ENCODE measurements at regions of chr14 and their contacts with region 1.

Region 1: GRCh38 chr14:103512701-103513611 is 9.7 kb downstream of the CKB start:
- DNase-seq: peak; percentile 97
- H3K4me3 ChIP-seq: peak overlapping the region in 1 of 3 experiments; percentile 12
- H3K27ac ChIP-seq: peak overlapping the region; percentile 73
- H3K4me1 ChIP-seq: peaks cover 21% of the 10 kb centered on the region
- H3K27me3 ChIP-seq: no peaks in the 10 kb centered on the region
- CTCF ChIP-seq: no peak

Region 2: DNA sequence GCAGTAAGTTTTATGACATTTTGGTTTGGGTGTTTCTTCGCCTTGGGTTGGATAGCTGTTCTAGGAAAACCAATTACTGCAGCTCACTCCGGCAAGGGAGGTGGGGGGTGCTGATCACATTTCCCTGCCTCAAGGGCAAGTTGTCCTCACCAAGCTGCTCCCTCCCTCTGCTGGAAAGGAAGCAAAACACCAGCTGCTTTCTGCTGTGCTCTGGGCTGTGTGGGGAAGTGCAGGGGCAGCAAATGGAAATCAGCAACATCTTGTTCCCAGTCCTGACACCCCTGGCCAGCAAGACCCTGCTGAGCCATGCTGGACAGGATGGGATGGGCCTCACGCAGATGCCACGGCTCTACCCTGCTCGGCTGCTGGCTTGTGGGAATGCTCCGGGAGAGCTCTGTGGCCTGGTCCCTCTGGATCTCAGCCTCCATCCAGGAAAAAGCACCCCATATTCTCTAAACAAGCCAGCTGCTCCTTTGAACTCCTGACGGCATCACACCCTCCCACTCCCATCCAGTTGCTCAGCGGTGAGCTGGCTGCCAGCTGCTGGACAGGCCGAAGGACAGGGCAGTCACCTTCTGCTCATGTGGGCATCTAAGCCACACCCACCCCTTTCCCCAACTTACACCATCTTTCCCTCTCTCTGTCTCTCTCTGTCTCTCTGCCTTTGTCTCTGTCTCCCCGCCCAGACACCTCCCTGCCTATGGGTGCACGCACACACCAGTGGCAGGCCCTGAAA is 231.3 kb before region 1 on chr14:
- CTCF ChIA-PET with region 1: no interaction called
- dilution Hi-C with region 1: no loop called
- in situ Hi-C with region 1: no loop called
- intact Hi-C with region 1: no loop called
- DNase-seq: peak; percentile 24
- H3K4me3 ChIP-seq: no peak overlapping the region
- H3K27ac ChIP-seq: no peak overlapping the region
- H3K4me1 ChIP-seq: peaks cover 5% of the 10 kb centered on the region
- H3K27me3 ChIP-seq: peaks cover 15% of the 10 kb centered on the region
- CTCF ChIP-seq: peak in 1 of 2 donors; percentile 51

Region 3: GRCh38 chr14:103408491-103409155 is 104.3 kb before region 1 on chr14:
- CTCF ChIA-PET with region 1: no interaction called
- dilution Hi-C with region 1: loop called (anchors 5 kb)
- in situ Hi-C with region 1: no loop called
- intact Hi-C with region 1: no loop called
- DNase-seq: no peak
- H3K4me3 ChIP-seq: no peak overlapping the region
- H3K27ac ChIP-seq: no peak overlapping the region
- H3K4me1 ChIP-seq: peaks cover 1% of the 10 kb centered on the region
- H3K27me3 ChIP-seq: no peaks in the 10 kb centered on the region
- CTCF ChIP-seq: no peak

Region 4: GRCh38 chr14:103444837-103445524 is 68.0 kb before region 1 on chr14:
- CTCF ChIA-PET with region 1: no interaction called
- dilution Hi-C with region 1: loop called (anchors 5 kb)
- in situ Hi-C with region 1: no loop called
- intact Hi-C with region 1: no loop called
- DNase-seq: no peak
- H3K4me3 ChIP-seq: no peak overlapping the region
- H3K27ac ChIP-seq: no peak overlapping the region
- H3K4me1 ChIP-seq: no peaks in the 10 kb centered on the region
- H3K27me3 ChIP-seq: no peaks in the 10 kb centered on the region
- CTCF ChIP-seq: no peak

Region 5: GRCh38 chr14:103500148-103500990 is 12.6 kb before region 1 on chr14:
- CTCF ChIA-PET with region 1: no interaction called
- dilution Hi-C with region 1: no loop called
- in situ Hi-C with region 1: no loop called
- intact Hi-C with region 1: loop called (anchors 1 kb)
- DNase-seq: peak; percentile 60
- H3K4me3 ChIP-seq: no peak overlapping the region
- H3K27ac ChIP-seq: no peak overlapping the region
- H3K4me1 ChIP-seq: peaks cover 4% of the 10 kb centered on the region
- H3K27me3 ChIP-seq: no peaks in the 10 kb centered on the region
- CTCF ChIP-seq: peak; percentile 95 to 96

Region 6: DNA sequence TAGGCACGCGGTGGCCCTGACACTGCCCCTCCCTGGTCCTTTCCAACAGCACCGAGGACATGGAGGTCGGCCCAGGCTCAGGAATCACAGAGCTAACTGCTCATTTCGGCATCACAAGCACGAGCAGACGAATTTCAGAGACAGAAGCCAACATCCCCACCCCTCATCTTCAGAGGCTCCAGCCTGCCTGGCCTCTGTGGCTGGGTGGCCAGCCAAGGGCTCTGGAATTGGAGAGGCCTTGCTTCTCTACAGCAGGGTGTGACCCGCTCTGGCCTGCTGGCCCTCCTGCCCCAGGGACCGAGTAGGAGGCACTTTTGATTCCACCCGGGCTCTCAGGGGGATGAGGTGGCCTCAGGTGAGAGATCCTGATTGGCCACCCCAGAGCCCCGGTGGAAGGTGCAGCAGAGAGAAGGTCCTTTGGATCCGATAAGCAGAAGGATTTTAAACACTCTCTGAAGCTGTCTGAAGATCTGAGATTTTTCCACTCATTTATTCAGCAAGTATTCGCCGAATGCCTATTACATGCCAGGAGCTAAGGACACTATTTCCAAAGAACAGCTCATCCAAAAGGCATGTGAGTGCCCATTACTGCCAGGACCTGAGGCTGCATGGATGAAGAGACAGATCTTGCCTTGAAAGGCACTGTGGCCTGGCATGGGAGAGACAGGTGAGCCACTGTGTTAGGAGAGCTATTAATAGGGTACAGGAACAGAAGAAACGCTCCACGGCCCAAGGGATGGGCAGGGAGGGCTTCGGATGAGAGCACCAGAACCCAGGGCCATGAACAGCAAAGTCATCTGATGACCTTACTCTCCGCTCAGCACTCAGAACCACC is 39.3 kb after region 1 on chr14:
- CTCF ChIA-PET with region 1: no interaction called
- dilution Hi-C with region 1: loop called (anchors 5 kb)
- in situ Hi-C with region 1: no loop called
- intact Hi-C with region 1: no loop called
- DNase-seq: peak; percentile 70
- H3K4me3 ChIP-seq: peak overlapping the region in 1 of 3 experiments; percentile 10
- H3K27ac ChIP-seq: peak overlapping the region; percentile 1
- H3K4me1 ChIP-seq: peaks cover 41% of the 10 kb centered on the region
- H3K27me3 ChIP-seq: no peaks in the 10 kb centered on the region
- CTCF ChIP-seq: no peak

Region 7: GRCh38 chr14:103594265-103594664 is 81.3 kb after region 1 on chr14:
- CTCF ChIA-PET with region 1: no interaction called
- dilution Hi-C with region 1: loop called (anchors 5 kb)
- in situ Hi-C with region 1: no loop called
- intact Hi-C with region 1: no loop called
- DNase-seq: peak; percentile 93
- H3K4me3 ChIP-seq: peak overlapping the region in 1 of 3 experiments; percentile 13
- H3K27ac ChIP-seq: peak overlapping the region; percentile 43
- H3K4me1 ChIP-seq: peaks cover 37% of the 10 kb centered on the region
- H3K27me3 ChIP-seq: no peaks in the 10 kb centered on the region
- CTCF ChIP-seq: no peak